ENCODE measurements at regions of chr17 and their contacts with region 1.

Region 1: GRCh38 chr17:1673041-1673785 is 11.5 kb downstream of the PRPF8 start:
- DNase-seq: no peak
- H3K4me3 Mint-ChIP-seq: no peak overlapping the region
- H3K27ac Mint-ChIP-seq: no peak overlapping the region
- H3K4me1 Mint-ChIP-seq: peaks cover 11% of the 10 kb centered on the region
- H3K27me3 Mint-ChIP-seq: no peaks in the 10 kb centered on the region
- CTCF ChIP-seq: no peak

Region 2: GRCh38 chr17:1648963-1649843 is 24.0 kb before region 1 on chr17:
- CTCF ChIA-PET with region 1: interaction called, 11 read pairs
- POLR2A ChIA-PET with region 1: interaction called, 16 read pairs
- intact Hi-C with region 1: no loop called
- DNase-seq: peak; percentile 89
- H3K4me3 Mint-ChIP-seq: peak overlapping the region; percentile 70
- H3K27ac Mint-ChIP-seq: peak overlapping the region; percentile 23
- H3K4me1 Mint-ChIP-seq: peaks cover 4% of the 10 kb centered on the region
- H3K27me3 Mint-ChIP-seq: no peaks in the 10 kb centered on the region
- CTCF ChIP-seq: peak; percentile 82

Region 3: GRCh38 chr17:1658100-1658499 is 15.1 kb before region 1 on chr17:
- CTCF ChIA-PET with region 1: interaction called, 17 read pairs
- POLR2A ChIA-PET with region 1: interaction called, 3 read pairs
- intact Hi-C with region 1: no loop called
- DNase-seq: no peak
- H3K4me3 Mint-ChIP-seq: no peak overlapping the region
- H3K27ac Mint-ChIP-seq: no peak overlapping the region
- H3K4me1 Mint-ChIP-seq: no peaks in the 10 kb centered on the region
- H3K27me3 Mint-ChIP-seq: no peaks in the 10 kb centered on the region
- CTCF ChIP-seq: no peak

Region 4: DNA sequence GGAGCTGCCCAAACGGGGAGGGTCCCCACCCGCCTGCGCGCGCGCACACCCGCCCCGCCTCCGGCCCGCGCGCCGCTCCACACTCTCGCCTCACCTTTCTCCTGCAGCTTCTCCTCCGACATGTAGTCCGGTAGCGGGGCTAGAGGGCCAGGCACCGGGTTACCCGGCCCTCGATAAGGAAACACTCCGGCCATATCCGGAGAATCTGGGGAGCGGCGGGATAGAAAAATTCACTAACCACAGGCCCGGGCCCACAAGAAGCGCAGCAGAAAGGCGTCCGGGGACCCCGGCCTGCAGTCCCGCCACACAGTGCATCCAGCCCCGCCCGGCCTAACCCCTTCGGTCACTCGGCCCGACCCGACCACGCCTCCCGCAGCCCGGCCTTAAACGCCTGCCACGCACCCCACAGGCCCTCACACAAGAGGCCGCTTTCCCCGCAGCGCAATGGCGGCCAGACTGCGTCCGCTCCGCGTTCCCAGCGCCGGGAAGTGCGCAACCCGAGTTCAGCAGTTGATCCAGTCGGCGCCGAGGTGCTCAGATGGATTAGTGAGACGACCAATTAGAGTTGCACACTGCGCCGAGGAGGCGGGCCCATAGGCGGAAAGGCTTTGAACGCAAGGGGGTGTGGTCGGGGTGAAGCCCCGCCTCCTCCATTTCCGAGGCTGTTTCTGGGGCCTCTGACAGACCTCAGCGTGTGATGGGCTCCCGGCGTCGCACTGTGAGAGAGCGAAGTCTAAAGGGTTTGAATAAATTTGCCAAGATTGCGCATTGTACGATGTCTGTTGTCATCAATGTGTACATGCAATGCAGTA is 11.4 kb after region 1 on chr17 and contains the start of gene PRPF8:
- CTCF ChIA-PET with region 1: interaction called, 15 read pairs
- POLR2A ChIA-PET with region 1: interaction called, 32 read pairs
- intact Hi-C with region 1: no loop called
- DNase-seq: peak; percentile 97
- H3K4me3 Mint-ChIP-seq: peak within 1 kb of the TSS; percentile 88
- H3K27ac Mint-ChIP-seq: peak within 1 kb of the TSS; percentile 94
- H3K4me1 Mint-ChIP-seq: peaks cover 24% of the 10 kb centered on the region
- H3K27me3 Mint-ChIP-seq: no peaks in the 10 kb centered on the region
- CTCF ChIP-seq: no peak
- total RNA-seq, gene PRPF8: 239 and 261 TPM in 2 replicates

Region 5: DNA sequence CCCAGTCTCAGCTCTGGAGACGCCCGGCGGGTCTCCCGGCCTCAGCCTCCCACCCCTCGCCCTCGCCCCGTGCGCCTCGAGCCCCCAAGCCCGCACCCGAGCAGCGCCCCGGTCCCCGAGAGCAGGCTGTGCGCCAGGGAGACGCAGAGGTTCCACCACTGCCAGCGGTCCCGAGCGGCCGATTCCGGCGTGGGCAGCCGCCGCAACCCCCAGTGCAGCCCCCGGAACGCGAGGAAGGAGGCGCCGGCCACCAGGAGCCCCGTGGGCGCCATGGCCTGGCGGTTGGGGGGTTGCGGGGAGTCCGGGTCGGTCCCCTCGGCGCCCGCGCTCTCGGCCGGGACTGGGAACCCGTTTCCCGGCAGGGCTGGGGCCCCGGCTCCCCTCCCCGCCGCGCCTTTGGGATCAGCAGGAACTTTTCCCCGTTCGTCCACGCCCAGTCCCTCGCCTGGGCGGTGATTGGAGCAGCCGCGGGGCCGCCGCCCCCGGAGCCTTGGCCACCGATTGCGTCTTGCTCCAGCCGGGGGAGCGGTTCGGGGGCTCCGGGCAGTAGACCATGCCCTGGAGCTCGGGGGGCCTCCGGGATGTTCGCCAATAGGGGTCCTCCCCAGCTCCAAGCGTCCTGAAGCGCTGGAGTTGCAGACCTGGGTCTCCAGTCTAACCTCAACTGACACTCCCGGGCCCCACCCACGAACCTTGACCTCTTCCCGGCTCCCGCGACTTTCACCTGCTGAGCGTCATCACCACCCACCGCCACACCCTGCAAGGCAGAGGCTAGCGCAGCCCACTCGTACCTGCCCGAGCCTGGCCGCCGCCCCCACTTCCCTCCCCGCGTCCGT is 37.0 kb after region 1 on chr17 and contains the start of gene TLCD2:
- CTCF ChIA-PET with region 1: interaction called, 8 read pairs
- POLR2A ChIA-PET with region 1: interaction called, 19 read pairs
- intact Hi-C with region 1: loop called (anchors 1 kb)
- DNase-seq: peak; percentile 67
- H3K4me3 Mint-ChIP-seq: peak within 1 kb of the TSS; percentile 68
- H3K27ac Mint-ChIP-seq: peak within 1 kb of the TSS; percentile 16
- H3K4me1 Mint-ChIP-seq: peaks cover 21% of the 10 kb centered on the region
- H3K27me3 Mint-ChIP-seq: no peaks in the 10 kb centered on the region
- CTCF ChIP-seq: no peak
- total RNA-seq, gene TLCD2: 2.5 and 4.0 TPM in 2 replicates

Region 6: GRCh38 chr17:1783834-1784611 is 110.8 kb after region 1 on chr17:
- CTCF ChIA-PET with region 1: interaction called, 3 read pairs
- POLR2A ChIA-PET with region 1: interaction called, 8 read pairs
- intact Hi-C with region 1: loop called (anchors 2 kb)
- DNase-seq: peak; percentile 62
- H3K4me3 Mint-ChIP-seq: no peak overlapping the region
- H3K27ac Mint-ChIP-seq: peak overlapping the region; percentile 79
- H3K4me1 Mint-ChIP-seq: peaks cover 28% of the 10 kb centered on the region
- H3K27me3 Mint-ChIP-seq: no peaks in the 10 kb centered on the region
- CTCF ChIP-seq: peak; percentile 74

Region 7: DNA sequence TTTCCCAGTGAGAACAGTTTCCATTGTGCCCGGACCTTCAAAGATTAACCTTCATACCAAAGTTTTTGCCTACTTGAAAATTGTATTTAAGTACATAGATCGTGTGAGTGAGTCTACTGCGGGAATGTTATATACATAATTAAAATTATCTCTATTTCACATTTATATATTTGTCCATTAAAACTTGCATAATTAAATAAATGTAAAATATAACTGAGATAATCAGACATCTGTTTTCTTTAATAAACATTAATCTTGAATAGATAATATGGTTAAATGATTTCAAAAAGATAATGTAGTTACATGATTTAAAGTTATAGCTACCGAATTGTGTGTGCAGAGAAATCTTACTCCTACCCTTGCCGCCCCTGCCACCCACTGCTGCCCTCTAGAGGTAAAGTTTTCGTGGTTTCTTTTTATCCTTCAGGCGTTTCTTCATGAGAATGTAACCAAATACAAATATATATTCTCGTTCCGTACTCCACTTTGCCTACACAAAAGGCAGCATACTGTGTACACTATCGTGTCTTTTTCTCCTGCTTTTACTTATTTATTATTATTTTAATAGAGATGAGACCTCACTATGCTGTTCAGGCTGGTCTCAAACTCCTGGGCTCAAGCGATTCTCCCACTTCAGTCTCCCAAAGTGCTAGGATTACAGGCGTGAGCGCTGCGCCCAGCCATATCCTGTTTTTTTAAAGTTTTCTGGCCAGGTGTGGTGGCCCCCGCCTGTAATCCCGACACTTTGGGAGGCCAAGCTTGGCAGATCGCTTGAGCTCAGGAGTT is 192.2 kb after region 1 on chr17:
- CTCF ChIA-PET with region 1: no interaction called
- POLR2A ChIA-PET with region 1: no interaction called
- intact Hi-C with region 1: loop called (anchors 5 kb)
- DNase-seq: peak; percentile 61
- H3K4me3 Mint-ChIP-seq: no peak overlapping the region
- H3K27ac Mint-ChIP-seq: no peak overlapping the region
- H3K4me1 Mint-ChIP-seq: no peaks in the 10 kb centered on the region
- H3K27me3 Mint-ChIP-seq: no peaks in the 10 kb centered on the region
- CTCF ChIP-seq: peak; percentile 68

Measured in MCF 10A (cell line).